ENCODE measurements at regions of chr14 and their contacts with region 1.

Region 1: GRCh38 chr14:76812211-76813044 is at the start of gene ANGEL1:
- DNase-seq: peak; percentile 98
- ATAC-seq: peak; percentile 92
- total RNA-seq, gene ANGEL1: 10.5 TPM

Region 2: DNA sequence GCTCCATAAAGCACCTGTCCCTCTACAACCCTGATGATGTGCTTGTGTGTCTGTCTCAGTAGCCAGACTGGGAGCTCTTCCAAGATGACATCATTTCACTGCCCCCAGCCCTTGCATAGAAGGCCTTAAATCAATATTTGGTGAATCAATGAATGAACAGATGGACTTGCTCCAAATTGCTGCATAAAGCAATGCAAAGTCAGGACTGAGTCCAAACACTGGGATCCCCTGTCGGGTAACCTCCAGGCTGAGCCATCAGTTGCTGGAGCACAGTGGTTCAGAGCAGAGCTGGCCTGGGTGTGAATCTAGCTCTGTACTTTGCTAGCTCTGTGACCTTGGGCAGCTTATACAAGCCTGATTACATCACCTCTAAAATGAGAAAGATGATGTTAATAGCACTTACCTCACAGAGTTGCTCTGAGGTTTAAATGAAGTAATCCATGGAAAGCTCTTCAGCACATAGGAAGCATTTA is 171.5 kb before region 1 on chr14:
- intact Hi-C with region 1: no loop called
- DNase-seq: no peak
- ATAC-seq: peak; percentile 58

Region 3: DNA sequence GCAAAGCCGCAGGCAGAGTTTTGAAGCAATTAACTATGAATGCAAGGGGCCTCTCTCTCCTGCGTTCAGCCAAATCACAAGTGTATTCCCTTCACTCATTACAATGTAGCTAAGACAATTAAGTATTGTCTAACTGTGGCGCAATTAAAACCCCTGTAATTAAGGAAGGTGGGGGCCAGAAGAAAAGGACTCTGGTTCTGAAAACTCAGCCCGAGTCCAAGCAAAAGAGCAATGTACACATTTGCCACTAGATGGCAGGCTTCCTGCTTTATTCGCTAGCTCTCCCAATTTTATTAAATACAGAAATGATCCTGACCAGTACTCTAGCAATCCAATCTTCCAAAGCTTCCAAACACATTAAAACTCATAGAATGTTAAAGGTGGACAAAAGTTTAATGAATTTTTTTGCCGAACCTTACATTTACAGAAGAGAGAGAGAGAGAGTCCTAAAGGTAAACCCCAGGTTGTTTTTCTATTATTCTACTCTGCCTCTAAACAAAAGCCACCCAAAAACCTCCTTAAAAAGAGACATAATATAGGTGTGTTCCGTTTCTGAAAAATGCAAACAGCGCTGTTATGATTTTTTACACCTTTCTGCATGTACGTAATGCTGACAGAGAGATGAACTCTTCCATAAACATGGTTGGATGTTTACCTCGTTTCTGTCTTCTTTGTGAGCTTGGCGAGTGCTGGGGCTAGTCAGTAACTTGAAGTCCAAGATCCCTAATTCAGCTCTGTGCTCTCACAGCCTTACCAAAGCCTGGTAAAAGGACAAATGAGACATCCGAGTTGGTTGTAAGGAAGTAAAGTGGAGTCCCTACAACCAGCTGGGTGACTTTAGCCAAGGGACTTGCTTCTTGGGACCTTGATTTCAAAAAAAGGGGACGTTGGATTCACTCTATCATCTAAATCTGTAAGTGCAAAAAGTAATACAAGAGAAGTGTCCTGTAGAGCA is 102.1 kb before region 1 on chr14:
- intact Hi-C with region 1: loop called (anchors 1 kb)
- DNase-seq: no peak
- ATAC-seq: peak; percentile 63

Region 4: DNA sequence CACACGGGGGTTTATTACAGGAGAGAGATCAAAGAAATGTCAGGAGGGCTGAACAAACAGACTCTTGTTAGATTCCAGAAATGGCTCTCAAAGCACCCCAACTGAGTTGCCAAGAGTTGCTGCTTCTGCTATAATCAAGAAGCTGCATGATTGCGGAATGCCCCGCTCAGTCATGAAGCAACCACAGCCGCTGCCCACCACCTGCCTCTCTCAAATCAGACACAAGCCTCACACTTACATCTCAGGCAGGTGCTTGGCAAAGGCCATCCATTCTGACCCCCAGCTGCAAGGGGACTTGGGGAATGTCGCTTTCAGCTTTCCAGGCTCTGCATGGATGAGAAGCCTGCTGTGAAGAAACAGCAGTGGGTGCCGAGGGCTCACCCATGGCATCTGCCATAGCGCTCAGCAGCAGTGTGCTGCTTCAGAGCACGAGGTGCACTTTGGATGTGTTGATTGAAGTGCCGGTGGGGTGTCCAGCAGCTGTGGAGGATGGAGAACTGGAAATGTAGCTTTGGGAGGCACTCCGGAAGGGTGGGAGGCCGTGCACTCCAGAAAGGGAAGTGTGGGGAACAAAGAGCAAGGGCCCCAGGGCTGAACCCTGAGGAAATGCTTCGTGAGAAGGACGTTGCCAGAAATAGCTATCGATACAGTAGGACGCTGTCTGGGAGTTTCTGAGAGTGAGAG is 51.4 kb after region 1 on chr14:
- intact Hi-C with region 1: loop called (anchors 5 kb)
- DNase-seq: peak; percentile 86
- ATAC-seq: peak; percentile 79

Measured in Right ventricle myocardium inferior (tissue), 1 donor.